Posterior cingulate gyrus (tissue), 11 donors: ENCODE measurements at regions of chr11 and their contacts with region 1.

Region 1: GRCh38 chr11:43643898-43644620 is 36.5 kb upstream of the HSD17B12 start:
- DNase-seq: peak; percentile 79 to 98 (median 89)

Region 2: DNA sequence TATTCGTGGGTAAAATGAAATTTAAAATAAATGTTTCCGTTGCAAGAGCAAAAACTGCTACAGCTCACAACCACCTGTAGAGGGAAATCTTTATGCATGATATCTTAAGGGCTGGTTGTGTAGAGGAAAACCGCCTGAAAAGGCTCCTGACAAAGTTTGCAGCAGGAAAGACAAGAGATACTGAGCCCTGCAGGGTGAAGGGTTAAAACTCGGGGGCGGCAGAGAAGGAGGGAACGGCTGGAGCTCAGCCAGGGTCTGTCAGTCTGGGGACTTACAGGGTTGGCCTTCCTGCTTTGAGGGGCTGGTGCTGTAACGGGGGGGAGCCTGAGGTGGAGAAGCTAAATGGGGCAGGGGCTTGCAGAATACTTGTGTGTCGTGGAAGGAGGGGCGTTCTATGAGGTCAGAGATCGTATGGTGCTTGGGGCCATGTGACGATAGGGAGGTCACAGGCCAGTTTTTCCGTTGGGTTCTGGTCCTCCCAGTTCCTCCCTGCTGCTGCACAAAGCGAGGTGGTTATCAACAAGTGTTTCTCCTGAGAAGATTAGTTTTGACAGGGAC is 86.4 kb before region 1 on chr11:
- intact Hi-C with region 1: no loop called
- DNase-seq: peak in 1 of 10 donors; percentile 39

Region 3: GRCh38 chr11:43680521-43681400 is 36.7 kb after region 1 on chr11 and contains the start of gene HSD17B12:
- intact Hi-C with region 1: loop called (anchors 2 kb)
- DNase-seq: peak; percentile 98 to 100 (median 100)

Region 4: DNA sequence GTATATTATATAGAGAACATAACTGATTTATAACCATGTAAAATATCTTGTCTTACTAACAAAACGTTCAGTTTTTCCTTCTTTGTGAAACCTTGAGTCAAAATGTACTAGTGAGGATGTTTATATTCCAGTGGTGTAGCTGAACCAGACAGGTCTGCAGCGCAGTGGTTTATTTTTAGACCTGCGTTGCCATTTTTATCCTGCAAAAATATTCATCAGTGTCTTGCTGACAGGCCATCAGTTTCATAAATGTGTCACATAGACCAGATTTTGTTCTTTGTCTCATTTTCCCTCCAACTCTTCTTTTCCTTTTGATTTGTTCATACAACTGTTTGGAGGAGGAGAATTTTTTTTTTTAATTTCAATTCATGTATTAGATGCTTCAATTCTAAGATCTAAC is 79.6 kb after region 1 on chr11:
- intact Hi-C with region 1: no loop called
- DNase-seq: no peak

Region 5: DNA sequence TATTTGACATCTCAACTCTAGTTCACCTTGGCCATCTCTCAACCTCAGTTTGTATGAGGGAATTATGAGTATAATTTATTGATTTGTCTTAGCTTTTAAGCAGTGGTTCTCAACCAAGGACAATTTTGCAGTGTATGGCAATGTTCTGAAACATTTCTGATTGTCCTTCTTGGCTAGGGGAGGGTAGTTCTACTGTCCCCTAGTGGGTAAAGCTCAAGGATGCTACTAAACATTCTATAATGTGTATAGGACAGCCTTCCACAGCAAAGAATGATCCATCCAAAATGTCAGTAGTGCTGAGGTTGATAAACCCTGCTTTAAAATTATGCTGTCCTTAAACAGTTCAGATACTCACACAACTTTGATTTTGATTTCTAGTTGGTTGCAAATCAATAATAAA is 158.4 kb after region 1 on chr11:
- intact Hi-C with region 1: loop called (anchors 10 kb)
- DNase-seq: no peak